Heart left ventricle (tissue), 16 donors: ENCODE measurements at regions of chr3 and their contacts with region 1.

Region 1: DNA sequence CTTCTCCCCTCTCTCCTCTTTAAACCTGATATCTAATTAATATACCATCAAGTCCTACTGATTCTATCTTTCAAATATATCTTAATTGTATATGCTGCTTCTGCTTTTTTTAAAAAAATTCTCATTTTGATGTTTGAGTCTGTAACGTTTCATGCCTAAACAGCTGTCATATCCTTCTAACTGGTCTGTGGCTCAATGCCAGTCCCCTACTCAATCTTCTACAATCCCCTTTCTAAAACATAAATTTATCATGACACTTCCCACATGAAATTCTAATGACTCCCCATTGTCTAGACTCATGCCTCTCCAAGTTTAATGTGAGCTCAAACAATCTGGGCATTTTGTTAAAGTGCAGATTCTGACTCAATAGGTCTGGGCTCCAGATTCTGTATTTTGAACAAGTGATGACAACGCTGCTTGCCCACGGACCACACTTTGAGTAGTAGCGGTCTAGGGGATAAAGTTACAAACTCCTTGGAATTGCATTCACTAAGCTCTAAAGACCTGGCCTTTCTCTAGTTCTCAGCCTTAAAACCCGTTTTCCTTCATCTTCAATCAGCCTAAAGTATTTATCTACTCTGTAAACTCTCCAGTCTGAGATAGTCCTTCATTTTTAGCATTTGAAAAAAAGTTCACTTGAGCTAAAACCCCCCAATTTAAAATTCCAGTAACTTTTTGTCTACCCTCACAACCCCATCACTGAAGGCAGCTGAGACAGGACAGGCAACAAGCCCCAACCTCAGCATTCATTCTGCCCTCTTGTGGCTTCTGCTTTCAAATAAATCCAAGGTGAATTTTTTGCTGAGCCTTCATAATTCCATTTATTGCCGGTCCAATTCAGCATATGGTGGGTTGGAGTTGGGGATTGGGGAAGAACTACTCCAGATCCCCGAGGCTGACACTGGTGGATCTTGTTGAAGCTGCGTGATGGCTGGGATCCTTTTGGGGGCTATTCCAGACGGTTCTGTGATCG is 88.1 kb upstream of the THRB start:
- DNase-seq: no peak
- ATAC-seq: peak in 3 of 4 donors; percentile 36 to 59 (median 57)
- H3K4me3 ChIP-seq: no peak overlapping the region
- H3K27ac ChIP-seq: no peak overlapping the region
- H3K4me1 ChIP-seq: no peaks in the 10 kb centered on the region
- H3K27me3 ChIP-seq: no peaks in the 10 kb centered on the region
- CTCF ChIP-seq: peak in 11 of 12 donors; percentile 10 to 54 (median 40)
- POLR2A ChIP-seq: no peak

Region 2: DNA sequence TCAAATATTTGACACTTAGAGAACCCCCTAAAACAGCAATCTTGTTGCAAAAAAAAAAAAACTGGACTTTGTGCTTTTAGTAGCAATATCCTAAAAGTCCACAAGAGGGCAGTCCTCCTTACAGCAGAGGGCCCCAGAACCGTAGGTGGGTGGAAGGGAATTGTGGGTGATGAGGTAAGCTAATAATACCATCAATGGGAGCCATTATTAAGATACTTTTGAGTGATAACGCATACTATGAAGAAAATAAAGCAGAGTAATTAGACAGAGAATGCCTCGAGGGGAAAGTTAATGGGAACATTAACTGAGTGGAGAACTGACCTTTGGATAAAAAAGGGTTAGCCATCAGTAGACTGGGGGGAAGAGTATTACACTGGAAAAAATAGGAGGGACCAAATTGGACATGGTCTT is 318.0 kb before region 1 on chr3:
- intact Hi-C with region 1: loop called in 6 of 10 experiments (anchors 10 kb)
- DNase-seq: no peak
- ATAC-seq: peak in 3 of 4 donors; percentile 50 to 63 (median 55)
- H3K4me3 ChIP-seq: no peak overlapping the region
- H3K27ac ChIP-seq: no peak overlapping the region
- H3K4me1 ChIP-seq: peaks cover 0 to 14% (median 5%) of the 10 kb centered on the region in 12 donors
- H3K27me3 ChIP-seq: no peaks in the 10 kb centered on the region
- CTCF ChIP-seq: peak; percentile 62 to 79 (median 71)
- POLR2A ChIP-seq: no peak

Region 3: DNA sequence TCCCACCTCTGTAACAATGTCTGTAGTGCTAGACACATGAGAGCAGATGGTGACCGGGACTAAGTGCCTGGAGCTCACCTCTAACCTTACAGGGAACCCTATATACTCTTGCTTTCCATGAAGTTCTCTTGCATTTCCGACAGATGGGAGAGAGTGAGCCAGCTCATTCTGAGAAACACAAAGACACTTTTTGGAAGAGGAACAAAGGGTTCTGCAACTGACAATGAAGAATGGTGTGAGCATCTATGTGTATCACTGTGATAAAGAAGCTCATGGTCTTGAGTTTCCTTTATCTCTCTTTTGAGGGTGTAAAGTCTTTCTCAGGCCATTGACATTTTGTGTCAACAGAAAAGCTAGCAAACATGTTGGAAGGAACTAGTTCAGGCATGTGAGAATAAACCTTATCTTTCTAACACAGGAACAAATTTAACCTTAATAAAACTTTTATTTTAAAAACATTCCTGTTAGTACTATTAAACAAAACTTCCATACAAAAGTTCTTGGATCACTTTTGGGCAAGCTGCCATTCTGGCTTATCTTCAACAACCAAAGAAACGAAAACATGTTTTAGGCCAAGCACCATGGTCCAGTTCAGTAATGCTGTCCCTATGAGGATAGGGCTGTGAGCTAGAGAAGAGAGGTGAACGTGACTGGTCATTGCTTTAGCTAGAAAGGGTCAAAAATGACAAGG is 230.8 kb before region 1 on chr3:
- intact Hi-C with region 1: loop called in 1 of 10 experiments (anchors 10 kb)
- DNase-seq: peak in 3 of 5 donors; percentile 53 to 64 (median 63)
- ATAC-seq: peak; percentile 84 to 90 (median 88)
- H3K4me3 ChIP-seq: no peak overlapping the region
- H3K27ac ChIP-seq: peak overlapping the region in 6 of 12 donors; percentile 18 to 66 (median 37)
- H3K4me1 ChIP-seq: peaks cover 0 to 21% (median 13%) of the 10 kb centered on the region in 12 donors
- H3K27me3 ChIP-seq: no peaks in the 10 kb centered on the region
- CTCF ChIP-seq: no peak
- POLR2A ChIP-seq: no peak

Region 4: DNA sequence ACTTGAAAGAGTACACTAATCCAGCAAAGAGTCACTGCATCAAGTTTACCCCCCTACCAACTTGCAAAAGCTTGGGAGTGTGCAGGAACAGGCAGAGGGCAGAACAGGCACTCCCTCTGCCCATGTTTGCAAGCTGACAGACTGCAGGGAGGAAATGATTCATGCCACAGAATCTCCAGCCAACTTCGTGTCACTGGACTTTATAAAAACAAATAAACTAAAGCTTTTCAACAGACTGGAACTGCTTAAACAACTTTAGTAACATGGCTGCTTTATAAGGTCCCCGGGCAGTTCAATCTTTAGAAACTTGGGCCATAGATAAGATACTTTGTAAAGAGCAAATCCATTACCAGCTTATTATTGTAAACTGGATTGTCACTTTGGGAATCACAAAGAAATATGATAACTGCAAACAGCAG is 217.5 kb before region 1 on chr3:
- intact Hi-C with region 1: loop called in 2 of 10 experiments (anchors 10 kb)
- DNase-seq: peak in 4 of 5 donors; percentile 35 to 57 (median 46)
- ATAC-seq: peak; percentile 76 to 94 (median 93)
- H3K4me3 ChIP-seq: no peak overlapping the region
- H3K27ac ChIP-seq: peak overlapping the region in 9 of 12 donors; percentile 4 to 57 (median 28)
- H3K4me1 ChIP-seq: peaks cover 0 to 38% (median 24%) of the 10 kb centered on the region in 12 donors
- H3K27me3 ChIP-seq: no peaks in the 10 kb centered on the region
- CTCF ChIP-seq: peak in 4 of 12 donors; percentile 25 to 46 (median 40)
- POLR2A ChIP-seq: no peak

Region 5: GRCh38 chr3:24521420-24522145 is 61.1 kb before region 1 on chr3:
- intact Hi-C with region 1: loop called in 5 of 10 experiments (anchors 5 to 10 kb)
- DNase-seq: peak; percentile 62 to 87 (median 78)
- ATAC-seq: peak; percentile 70 to 97 (median 92)
- H3K4me3 ChIP-seq: peak overlapping the region; percentile 48 to 91 (median 78)
- H3K27ac ChIP-seq: peak overlapping the region; percentile 67 to 91 (median 88)
- H3K4me1 ChIP-seq: peaks cover 0 to 15% (median 10%) of the 10 kb centered on the region in 12 donors
- H3K27me3 ChIP-seq: peaks cover 0 to 23% (median 0%) of the 10 kb centered on the region in 9 donors
- CTCF ChIP-seq: peak in 7 of 12 donors; percentile 6 to 50 (median 38)
- POLR2A ChIP-seq: no peak